ENCODE measurements at regions of chr9 and their contacts with region 1.

Region 1: GRCh38 chr9:34072868-34073590 is 24.3 kb upstream of the UBAP2 start:
- DNase-seq: no peak
- H3K4me3 ChIP-seq: no peak overlapping the region
- H3K27ac ChIP-seq: no peak overlapping the region
- H3K4me1 ChIP-seq: no peaks in the 10 kb centered on the region
- H3K27me3 ChIP-seq: no peaks in the 10 kb centered on the region
- CTCF ChIP-seq: no peak

Region 2: DNA sequence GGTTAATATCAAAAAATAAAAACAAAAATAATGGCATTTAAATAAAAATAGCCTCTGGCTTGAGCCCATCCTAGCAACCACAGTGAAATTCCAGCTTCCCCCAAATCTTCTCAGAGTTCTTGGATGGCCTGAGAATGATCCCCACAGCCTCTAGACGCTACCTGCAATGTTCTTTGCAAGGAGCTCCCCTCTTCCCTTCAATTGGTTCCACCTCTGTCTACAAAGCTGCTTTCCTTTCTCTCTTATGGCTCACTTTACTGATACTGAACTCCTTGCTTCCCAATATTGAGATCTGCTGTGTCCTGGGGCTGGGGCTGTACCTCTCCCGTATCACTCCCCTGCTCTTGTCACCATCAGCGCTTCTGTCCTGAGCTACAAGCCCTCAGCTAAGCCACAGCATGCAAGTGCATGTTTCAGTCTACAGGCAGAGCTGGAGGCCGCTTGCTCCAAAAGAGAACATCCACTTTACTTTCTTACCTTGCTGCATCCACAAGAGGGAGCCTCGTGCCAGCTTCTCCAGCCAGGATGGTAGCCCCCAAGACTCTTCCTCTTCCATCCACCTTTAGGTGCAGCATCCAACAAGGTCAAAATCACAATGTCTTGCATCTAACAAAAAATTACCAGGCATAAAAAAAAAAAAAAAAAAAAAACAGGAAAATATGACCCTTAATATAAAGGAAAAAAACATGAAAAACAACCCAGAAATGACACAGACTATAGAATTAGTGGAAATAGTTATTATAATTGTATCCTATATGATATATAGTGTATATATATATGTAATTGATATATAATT is 335.0 kb before region 1 on chr9:
- CTCF ChIA-PET with region 1: interaction called, 9 read pairs
- POLR2A ChIA-PET with region 1: no interaction called
- intact Hi-C with region 1: loop called (anchors 5 kb)
- DNase-seq: peak; percentile 60
- H3K4me3 ChIP-seq: no peak overlapping the region
- H3K27ac ChIP-seq: no peak overlapping the region
- H3K4me1 ChIP-seq: no peaks in the 10 kb centered on the region
- H3K27me3 ChIP-seq: no peaks in the 10 kb centered on the region
- CTCF ChIP-seq: peak; percentile 71

Region 3: DNA sequence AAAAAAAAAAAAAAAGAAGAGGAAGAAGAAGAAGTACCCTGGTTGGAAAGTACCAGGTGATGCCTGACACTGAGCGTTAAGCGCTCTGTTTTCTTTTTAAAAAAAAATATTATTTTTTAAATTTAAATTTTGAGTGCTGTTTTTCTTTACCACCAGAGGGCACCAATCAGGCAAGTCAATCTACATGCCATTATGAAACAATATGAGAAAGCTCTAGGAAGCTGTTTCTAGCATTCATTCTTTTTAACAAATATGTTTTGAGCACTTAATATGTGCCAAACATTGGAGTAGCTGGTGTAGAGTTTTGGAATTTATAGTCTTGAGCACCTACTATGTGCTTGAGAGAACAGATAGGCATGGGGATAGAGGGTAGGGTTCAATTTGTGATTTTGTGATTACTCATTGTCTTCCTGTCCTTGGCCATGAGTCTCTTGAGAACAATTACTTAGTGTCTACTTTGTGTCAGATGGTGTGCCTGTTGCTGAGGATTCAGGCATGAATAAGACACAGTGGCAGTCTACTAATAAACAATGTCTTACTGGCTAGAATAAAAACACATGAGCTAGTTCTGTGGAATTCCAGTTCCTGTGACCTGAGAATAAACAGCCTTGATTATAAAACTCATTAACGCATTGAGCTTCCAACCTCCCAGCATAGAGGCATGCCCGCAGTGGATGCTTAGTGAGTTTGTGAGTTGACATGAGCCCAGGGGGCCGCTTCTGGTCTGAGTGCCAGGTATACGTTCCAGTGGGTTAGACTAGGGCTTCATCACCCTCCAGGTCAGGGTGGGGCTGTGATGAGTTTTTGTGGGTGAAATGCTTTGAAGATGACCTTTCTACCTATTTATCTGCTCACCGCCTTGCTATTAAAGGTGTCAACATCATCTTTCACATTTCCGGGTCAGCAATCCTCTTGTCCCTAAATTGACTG is 259.1 kb before region 1 on chr9:
- CTCF ChIA-PET with region 1: interaction called, 9 read pairs
- POLR2A ChIA-PET with region 1: interaction called, 5 read pairs
- intact Hi-C with region 1: loop called (anchors 2 kb)
- DNase-seq: peak; percentile 69
- H3K4me3 ChIP-seq: no peak overlapping the region
- H3K27ac ChIP-seq: peak overlapping the region; percentile 14
- H3K4me1 ChIP-seq: peaks cover 15% of the 10 kb centered on the region
- H3K27me3 ChIP-seq: no peaks in the 10 kb centered on the region
- CTCF ChIP-seq: peak; percentile 70

Region 4: DNA sequence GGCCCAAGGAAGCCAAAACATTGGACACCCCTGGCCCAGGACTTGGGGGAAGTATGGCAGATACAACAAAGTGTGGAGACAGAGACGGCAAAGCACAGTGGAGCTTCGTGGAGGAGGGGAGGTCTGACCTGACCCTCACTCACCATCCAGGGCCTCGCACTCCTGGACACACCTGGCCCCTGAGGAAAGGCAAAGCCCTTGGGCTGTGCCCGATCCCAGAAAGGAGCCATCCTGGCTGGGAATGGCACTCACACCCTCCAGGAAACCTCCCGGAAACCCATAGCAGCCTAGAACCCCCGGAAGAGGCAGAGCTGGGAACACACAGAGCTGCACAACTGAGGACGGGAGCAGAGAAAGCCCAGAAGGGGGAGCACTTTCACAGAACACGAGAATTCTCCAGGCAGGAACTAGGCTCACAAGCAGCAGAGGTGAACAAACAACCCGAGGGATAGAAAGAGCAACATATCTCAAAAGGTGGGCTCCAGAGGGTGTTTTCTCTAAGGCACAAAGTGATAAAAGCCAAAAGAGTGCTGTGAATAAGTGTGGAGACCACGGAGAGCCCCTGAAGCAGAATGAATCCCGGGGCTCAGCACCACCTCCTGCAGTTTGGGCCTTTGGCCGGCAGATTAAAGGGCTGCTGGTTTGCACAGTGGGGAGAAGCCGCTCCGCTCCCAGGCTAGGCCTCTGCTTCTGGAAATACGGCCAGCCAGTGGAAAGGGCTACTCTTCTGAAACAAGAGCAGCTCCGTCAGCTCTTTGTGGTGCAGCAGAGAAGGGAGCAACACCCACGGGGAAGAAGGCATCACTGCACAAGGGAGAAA is 147.8 kb before region 1 on chr9:
- CTCF ChIA-PET with region 1: interaction called, 7 read pairs
- POLR2A ChIA-PET with region 1: no interaction called
- intact Hi-C with region 1: loop called (anchors 1 kb)
- DNase-seq: peak; percentile 68
- H3K4me3 ChIP-seq: no peak overlapping the region
- H3K27ac ChIP-seq: no peak overlapping the region
- H3K4me1 ChIP-seq: no peaks in the 10 kb centered on the region
- H3K27me3 ChIP-seq: no peaks in the 10 kb centered on the region
- CTCF ChIP-seq: peak; percentile 81

Region 5: DNA sequence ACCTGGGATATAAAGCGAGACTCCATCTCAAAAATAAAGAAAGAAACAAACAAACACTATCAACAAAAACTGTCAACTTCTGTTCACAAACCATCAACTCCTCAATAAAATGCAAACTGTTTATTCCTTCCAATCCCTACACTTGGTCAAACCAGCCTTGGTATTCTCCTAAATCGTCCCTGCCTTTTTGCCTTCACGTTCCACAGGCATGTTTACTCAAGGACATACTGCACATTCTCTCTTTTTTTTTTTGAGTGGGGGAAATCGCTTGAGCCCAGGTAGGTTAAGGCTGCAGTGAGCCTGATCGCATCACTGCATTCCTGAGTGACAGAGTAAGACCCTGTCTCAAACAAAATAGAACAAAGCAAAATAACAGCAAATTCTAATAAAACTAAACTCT is 37.4 kb before region 1 on chr9:
- CTCF ChIA-PET with region 1: interaction called, 10 read pairs
- POLR2A ChIA-PET with region 1: no interaction called
- intact Hi-C with region 1: no loop called
- DNase-seq: no peak
- H3K4me3 ChIP-seq: no peak overlapping the region
- H3K27ac ChIP-seq: no peak overlapping the region
- H3K4me1 ChIP-seq: no peaks in the 10 kb centered on the region
- H3K27me3 ChIP-seq: no peaks in the 10 kb centered on the region
- CTCF ChIP-seq: no peak

Region 6: GRCh38 chr9:34252670-34253459 is 179.8 kb after region 1 on chr9:
- CTCF ChIA-PET with region 1: interaction called, 29 read pairs
- POLR2A ChIA-PET with region 1: no interaction called
- intact Hi-C with region 1: loop called (anchors 10 kb)
- DNase-seq: peak; percentile 66
- H3K4me3 ChIP-seq: no peak overlapping the region
- H3K27ac ChIP-seq: no peak overlapping the region
- H3K4me1 ChIP-seq: no peaks in the 10 kb centered on the region
- H3K27me3 ChIP-seq: no peaks in the 10 kb centered on the region
- CTCF ChIP-seq: peak; percentile 98

Measured in A673 (cell line).